RWPE1 (cell line): ENCODE measurements at regions of chr20 and their contacts with region 1.

Region 1: DNA sequence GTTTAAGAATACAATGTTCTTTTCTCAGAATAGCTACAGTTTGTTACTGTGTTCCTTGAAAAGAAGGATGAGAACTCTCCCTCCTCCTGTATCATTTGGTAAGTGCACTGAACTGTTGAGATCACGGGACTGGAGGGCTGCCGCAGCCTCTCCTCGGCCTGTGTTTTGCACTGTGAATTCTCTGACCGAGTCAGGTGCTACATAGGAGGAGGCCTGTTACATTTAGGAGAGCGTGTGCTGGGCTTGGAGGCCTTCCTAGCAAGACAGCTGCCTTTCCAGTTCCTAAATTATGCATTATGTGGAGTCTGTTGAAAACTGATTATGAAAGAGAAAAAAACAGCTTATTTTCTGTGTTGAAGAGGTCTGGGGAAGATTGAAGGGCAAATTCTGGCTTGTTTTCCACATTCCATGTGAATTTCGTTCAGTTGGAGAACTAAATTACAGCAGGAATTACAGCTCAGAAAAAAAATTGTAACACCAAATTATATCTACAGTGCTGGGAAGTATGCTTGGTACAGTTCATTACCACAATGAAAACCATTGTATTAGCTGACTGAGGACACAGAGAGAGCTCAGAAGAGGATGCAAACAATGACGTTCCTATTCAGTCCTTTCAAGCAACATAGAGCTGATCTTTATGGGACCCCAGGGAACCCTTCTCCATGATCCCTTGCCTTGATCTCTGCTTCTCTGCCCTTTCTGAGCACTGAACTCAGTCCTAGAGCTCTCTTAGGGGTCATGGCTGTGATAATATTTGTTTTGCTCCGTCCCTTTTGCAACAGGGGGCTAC is 2.8 kb downstream of the TMC2 start:
- DNase-seq: no peak
- H3K27ac ChIP-seq: no peak overlapping the region
- CTCF ChIP-seq: no peak

Region 2: GRCh38 chr20:2523919-2524708 is 15.0 kb before region 1 on chr20:
- CTCF ChIA-PET with region 1: interaction called, 13 read pairs
- POLR2A ChIA-PET with region 1: no interaction called
- DNase-seq: peak; percentile 55
- H3K27ac ChIP-seq: peak overlapping the region; percentile 64
- CTCF ChIP-seq: peak; percentile 98